BJ (cell line): ENCODE measurements at regions of chr2 and their contacts with region 1.

Region 1: GRCh38 chr2:113080134-113080533 is 12.4 kb downstream of the IL1F10 start:
- DNase-seq: no peak
- H3K4me3 ChIP-seq: no peak overlapping the region
- H3K27me3 ChIP-seq: peaks cover 8% of the 10 kb centered on the region
- CTCF ChIP-seq: peak; percentile 77

Region 2: DNA sequence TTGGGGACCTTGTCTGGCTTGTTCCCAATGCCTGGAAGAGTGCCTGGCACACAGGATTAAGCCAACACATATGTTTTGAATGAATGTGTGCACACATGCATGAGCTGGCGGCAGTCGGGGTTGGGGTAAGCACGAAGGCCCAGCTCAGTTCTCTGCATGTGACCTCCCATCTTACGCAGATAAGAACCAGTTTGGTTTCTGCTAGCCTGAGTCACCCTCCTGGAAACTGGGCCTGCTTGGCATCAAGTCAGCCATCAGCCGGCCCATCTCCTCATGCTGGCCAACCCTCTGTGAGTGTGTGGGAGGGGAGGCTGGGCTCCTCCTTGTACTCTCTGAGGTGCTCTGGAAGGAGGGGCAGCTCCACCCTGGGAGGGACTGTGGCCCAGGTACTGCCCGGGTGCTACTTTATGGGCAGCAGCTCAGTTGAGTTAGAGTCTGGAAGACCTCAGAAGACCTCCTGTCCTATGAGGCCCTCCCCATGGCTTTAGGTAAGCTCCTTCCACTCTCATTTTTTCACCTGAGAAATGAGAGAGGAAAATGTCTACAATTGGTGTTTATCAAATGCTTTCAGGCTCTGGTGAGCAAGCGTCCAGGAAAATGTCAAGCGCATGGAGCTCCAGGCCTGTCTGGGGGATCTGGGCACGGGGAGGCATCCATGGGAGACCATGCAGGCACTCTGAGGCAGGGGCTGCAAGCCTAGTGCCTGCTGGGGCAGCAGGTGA is 37.6 kb after region 1 on chr2:
- CTCF ChIA-PET with region 1: interaction called, 13 read pairs
- POLR2A ChIA-PET with region 1: no interaction called
- DNase-seq: peak; percentile 80
- H3K4me3 ChIP-seq: no peak overlapping the region
- H3K27me3 ChIP-seq: 0 out of 2 replicates have a peak, but pooled peaks cover 3% of the 10 kb centered on the region
- CTCF ChIP-seq: no peak